Sigmoid colon (tissue), 7 donors: ENCODE measurements at regions of chr7 and their contacts with region 1.

Region 1: DNA sequence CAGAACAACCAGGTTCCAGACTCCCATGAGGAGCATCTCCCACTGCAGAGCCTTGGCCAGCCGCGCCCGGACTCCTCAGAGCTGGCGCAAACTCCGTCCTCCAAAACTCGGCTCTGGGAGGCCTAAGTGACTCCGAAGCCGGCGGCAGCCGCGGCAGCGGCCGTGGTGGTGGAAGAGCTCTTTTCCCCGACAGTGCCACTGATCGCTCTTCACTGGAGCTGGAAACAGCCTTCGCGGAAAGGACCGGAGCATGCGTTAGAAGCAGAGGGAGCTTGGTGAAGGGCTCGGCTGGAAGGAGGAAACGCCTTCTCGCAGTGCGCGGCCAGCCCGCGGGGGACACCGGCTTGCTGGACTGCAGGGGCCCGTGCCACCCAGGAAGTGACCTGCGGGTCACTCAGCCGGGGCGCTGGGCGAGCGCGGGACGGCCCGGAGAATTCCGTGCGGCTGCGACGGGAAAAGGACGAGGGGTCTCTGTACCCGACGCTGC is 5.0 kb upstream of the HOXA13 start:
- DNase-seq: no peak
- H3K4me3 ChIP-seq: peak overlapping the region; percentile 20 to 45 (median 35)
- H3K27ac ChIP-seq: peak overlapping the region in 2 of 4 donors; percentile 2 to 51
- H3K4me1 ChIP-seq: peaks cover 0 to 31% (median 27%) of the 10 kb centered on the region in 4 donors
- H3K27me3 ChIP-seq: peaks cover 17 to 77% (median 19%) of the 10 kb centered on the region in 3 donors
- CTCF ChIP-seq: no peak
- EP300 ChIP-seq: no peak
- POLR2A ChIP-seq: no peak

Region 2: GRCh38 chr7:26937939-26938623 is 266.8 kb before region 1 on chr7:
- intact Hi-C with region 1: no loop called
- DNase-seq: no peak
- H3K4me3 ChIP-seq: no peak overlapping the region
- H3K27ac ChIP-seq: no peak overlapping the region
- H3K4me1 ChIP-seq: no peaks in the 10 kb centered on the region
- H3K27me3 ChIP-seq: no peaks in the 10 kb centered on the region
- CTCF ChIP-seq: no peak
- EP300 ChIP-seq: no peak
- POLR2A ChIP-seq: no peak

Region 3: GRCh38 chr7:27242555-27243339 is 37.9 kb after region 1 on chr7 and contains the start of gene EVX1:
- intact Hi-C with region 1: loop called (anchors 5 kb)
- DNase-seq: no peak
- H3K4me3 ChIP-seq: peak within 1 kb of the TSS in 3 of 4 donors; percentile 20 to 41 (median 33)
- H3K27ac ChIP-seq: no peak within 1 kb of the TSS
- H3K4me1 ChIP-seq: peaks cover 0 to 56% (median 48%) of the 10 kb centered on the region in 4 donors
- H3K27me3 ChIP-seq: peaks cover 79 to 95% (median 93%) of the 10 kb centered on the region in 3 donors
- CTCF ChIP-seq: no peak
- EP300 ChIP-seq: no peak
- POLR2A ChIP-seq: no peak
- total RNA-seq, gene EVX1: not detected

Region 4: DNA sequence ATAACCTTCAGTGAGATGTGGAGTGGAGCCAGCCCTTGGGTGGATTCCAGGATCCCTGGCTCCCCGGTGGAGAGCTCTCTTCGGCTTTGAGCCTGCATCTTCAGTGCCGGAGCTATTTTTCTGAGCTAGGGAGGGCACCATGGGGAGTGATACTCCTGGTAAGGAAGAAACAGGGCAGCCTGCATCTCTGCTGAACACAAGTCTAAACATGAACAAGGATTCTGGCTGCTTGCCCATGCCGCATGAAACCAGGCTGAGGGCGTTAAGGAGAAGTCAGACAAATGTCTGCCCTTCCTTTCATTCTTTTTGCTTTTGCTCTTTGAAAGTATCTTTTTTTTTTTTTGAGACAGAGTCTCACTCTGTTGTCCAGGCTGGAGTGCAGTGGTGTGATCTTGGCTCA is 98.1 kb after region 1 on chr7:
- intact Hi-C with region 1: no loop called
- DNase-seq: no peak
- H3K4me3 ChIP-seq: no peak overlapping the region
- H3K27ac ChIP-seq: no peak overlapping the region
- H3K4me1 ChIP-seq: no peaks in the 10 kb centered on the region
- H3K27me3 ChIP-seq: no peaks in the 10 kb centered on the region
- CTCF ChIP-seq: no peak
- EP300 ChIP-seq: no peak
- POLR2A ChIP-seq: no peak